Left cardiac atrium (tissue), 4 donors: ENCODE measurements at regions of chr19 and their contacts with region 1.

Region 1: GRCh38 chr19:36973021-36973843 is 57.1 kb downstream of the ZNF568 start:
- DNase-seq: peak; percentile 90
- ATAC-seq: peak; percentile 100

Region 2: GRCh38 chr19:36850559-36851442 is 122.4 kb before region 1 on chr19 and contains the start of gene ZNF345:
- intact Hi-C with region 1: no loop called
- DNase-seq: peak; percentile 93
- ATAC-seq: peak; percentile 97 to 98
- total RNA-seq, gene ZNF345: 3.0 to 4.5 TPM

Region 3: GRCh38 chr19:37227996-37228395 is 254.8 kb after region 1 on chr19:
- intact Hi-C with region 1: loop called in 1 of 2 experiments (anchors 10 kb)
- DNase-seq: no peak
- ATAC-seq: no peak